ENCODE measurements at regions of chr1 and their contacts with region 1.

Region 1: GRCh38 chr1:182391362-182392044 is at the start of gene GLUL:
- DNase-seq: peak; percentile 98
- ATAC-seq: peak; percentile 92
- total RNA-seq, gene GLUL: 384 TPM

Region 2: DNA sequence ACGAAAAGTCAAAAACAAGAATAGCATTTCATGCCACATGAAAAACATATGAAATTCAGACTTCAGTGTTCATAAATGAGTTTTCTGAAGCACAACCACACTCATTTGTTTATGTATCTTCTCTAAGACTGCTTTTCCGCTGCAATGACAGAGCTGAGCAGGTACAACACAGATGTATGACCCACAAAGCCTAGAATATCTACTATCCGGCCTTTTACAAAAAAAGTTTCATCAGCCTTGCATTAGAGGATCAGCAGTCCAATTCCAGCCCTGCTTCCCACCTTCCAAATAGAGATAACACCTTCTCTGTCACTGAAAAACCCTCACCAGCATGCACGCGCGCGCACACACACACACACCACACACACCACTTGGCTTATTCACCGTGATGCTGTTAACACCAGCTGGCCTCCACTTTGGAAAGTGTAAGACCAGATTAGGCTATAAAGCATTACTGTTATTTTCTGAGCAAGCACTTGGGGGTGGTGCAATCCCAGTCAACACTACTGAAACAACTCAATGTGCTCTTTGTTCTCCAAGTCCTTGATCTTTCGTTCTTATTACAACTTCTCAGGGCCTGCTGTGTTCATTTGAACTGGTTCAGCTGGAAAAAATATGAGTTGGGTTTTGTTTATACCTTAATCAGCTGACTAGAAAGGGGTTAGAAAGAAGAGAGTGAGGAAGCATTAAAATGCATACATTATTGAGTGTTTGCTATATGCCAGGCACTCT is 89.9 kb before region 1 on chr1:
- intact Hi-C with region 1: loop called (anchors 10 kb)
- DNase-seq: peak; percentile 71
- ATAC-seq: peak; percentile 76

Measured in Right ventricle myocardium superior (tissue), 1 donor.